Posterior vena cava (tissue), 2 donors: ENCODE measurements at regions of chr2 and their contacts with region 1.

Region 1: DNA sequence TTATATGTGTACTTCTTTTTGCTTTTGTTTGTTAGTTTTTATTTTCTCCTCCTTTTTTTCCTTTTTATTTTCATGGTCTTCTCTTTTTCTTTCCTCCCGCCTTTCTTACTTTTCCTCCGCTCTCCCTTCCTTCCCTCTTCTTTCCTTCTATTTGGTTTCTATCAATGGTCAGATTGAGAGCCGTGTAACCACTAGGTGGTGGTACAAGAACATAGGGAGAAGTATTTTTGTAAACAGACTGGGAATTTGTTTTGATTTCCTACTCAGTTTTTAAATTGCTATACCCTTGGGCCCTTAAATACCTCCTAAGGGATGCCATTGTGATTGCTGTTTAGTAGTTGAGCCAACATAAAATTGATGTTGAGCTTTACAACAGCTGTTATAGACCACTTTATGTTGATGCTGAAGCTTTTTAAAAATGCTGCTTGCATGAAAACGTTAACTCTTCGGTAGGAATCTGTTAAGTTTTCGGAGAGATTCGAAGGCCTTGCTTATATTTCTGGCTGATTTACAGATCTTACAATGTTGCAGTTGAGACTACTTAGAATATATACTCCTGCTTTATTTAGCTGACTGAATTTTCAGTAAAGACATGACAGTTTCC is 124.2 kb downstream of the UBE2E3 start:
- DNase-seq: no peak

Region 2: DNA sequence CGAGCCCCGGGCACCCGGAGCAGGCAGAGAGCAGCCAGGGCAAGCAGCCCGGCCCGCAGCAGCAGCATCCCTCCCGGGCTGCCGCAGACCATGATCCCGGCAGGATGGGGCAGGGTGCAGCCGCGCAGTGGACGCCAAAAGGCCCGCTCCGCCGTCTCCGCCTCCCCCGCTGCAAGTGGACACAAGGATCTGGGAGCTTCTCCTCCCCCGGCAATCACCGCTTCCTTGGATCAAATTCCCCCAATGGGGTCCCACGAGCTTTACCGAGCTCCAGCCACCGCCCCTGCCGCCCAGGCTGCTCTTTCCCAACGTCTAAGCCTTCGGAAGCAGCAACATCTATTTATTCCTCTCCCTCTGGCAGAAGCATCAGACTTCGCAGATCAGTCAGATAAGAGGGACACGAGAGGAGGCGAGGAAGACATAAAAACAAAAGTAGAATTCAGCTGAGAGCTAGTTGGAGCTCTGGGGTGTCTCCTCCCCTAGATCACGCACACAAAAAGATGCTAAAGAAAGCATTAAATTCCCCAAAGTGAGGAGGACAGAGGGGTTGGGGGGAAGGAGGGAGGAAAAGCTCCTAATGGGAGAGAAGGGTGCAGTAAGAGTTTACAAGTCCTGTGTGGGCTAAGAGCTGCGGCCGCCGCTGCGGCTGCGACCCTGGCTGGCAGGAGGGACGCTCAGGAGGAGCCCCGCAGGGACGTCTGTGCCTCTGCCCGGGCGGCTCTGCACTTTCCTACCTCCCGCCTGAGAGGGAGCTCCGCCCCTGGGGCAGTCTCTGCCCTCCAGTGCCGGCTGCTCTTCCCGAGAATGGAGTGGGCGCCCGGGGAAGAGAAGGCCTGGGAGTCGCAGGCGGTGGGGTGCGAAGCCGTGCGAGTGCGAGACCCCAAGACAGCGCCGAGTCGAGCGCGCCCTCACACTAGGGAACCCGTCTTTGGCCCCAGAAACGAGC is 1762.1 kb after region 1 on chr2 and contains the start of gene FRZB:
- intact Hi-C with region 1: loop called in 1 of 2 experiments (anchors 10 kb)
- DNase-seq: peak; percentile 88
- total RNA-seq, gene FRZB: 5.4 to 6.9 TPM